Right cardiac atrium (tissue), 5 donors: ENCODE measurements at regions of chr1 and their contacts with region 1.

Region 1: DNA sequence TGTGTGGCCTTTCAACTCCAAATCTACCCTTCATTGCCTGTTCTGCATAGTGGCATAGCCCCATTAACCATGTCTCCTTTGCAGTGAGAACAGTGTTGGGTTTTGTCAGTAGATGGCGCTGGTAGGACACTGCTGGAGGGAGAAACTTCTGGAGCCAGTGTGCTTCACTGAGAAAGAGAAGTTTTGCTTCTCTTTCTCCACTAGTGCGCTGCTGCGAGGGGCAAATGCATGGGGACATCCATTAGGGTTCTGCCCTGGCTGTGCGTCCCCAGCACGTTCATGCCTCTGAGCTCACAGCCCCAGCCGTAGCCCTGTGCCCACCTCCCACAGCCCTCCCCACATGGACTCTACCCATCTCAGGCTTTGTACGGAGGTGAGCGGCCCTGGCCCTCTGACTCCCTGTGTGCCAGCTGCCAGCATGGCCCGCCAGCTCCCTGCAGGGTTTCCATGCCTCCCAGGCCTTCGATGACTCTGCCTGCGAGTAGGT is 53.1 kb downstream of the RIMS3 start:
- DNase-seq: peak in 2 of 3 donors; percentile 39 to 54
- ATAC-seq: peak; percentile 87 to 90
- H3K4me3 ChIP-seq: no peak overlapping the region
- H3K27ac ChIP-seq: no peak overlapping the region
- H3K4me1 ChIP-seq: no peaks in the 10 kb centered on the region
- H3K27me3 ChIP-seq: no peaks in the 10 kb centered on the region

Region 2: GRCh38 chr1:40668769-40669525 is 56.6 kb after region 1 on chr1:
- intact Hi-C with region 1: loop called (anchors 5 to 10 kb)
- DNase-seq: peak; percentile 73 to 90 (median 89)
- ATAC-seq: peak; percentile 34 to 40
- H3K4me3 ChIP-seq: no peak overlapping the region
- H3K27ac ChIP-seq: no peak overlapping the region
- H3K4me1 ChIP-seq: peaks cover 5% of the 10 kb centered on the region
- H3K27me3 ChIP-seq: no peaks in the 10 kb centered on the region

Region 3: GRCh38 chr1:40774266-40774998 is 162.0 kb after region 1 on chr1:
- intact Hi-C with region 1: loop called in 1 of 4 experiments (anchors 10 kb)
- DNase-seq: peak; percentile 43 to 85 (median 74)
- ATAC-seq: peak; percentile 40 to 44
- H3K4me3 ChIP-seq: no peak overlapping the region
- H3K27ac ChIP-seq: no peak overlapping the region
- H3K4me1 ChIP-seq: no peaks in the 10 kb centered on the region
- H3K27me3 ChIP-seq: no peaks in the 10 kb centered on the region

Region 4: DNA sequence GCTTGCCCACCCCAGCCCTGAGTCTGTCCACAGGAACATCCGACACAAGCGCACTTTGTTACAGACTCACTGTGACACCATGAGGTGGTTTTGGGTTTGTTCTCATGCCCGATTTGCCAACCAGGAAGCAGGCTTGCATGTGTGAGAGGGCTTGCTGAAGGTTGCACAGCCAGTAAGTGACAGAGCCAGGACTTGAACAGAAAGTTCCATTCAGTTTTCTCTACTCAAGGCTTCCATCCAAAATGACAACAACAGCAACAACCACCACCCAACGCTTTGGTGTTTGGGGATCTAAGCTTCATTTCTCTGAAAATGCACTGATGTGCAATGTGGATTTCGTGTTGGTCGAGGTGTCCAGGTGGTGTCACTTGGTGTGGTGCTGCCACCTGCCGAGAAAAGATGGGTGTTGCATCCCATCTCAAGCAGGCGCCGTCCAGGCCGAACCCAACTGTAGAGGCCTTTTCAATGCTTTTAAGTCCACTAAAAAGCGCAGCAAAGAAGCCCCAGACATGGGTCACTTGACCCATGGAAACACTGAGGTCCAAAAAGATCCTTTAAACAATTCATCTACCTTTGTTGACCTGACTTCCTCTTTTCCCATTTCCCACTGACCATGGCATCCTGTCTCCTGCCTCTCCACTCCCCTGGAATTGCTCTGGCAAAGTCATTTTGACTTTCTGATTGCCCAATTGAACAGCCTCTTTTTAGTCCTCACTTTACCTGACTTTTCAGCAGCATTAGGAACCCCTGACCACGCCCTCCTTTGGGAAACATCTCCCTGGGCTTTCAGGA is 237.6 kb after region 1 on chr1:
- intact Hi-C with region 1: loop called in 1 of 4 experiments (anchors 5 kb)
- DNase-seq: peak; percentile 64 to 87 (median 85)
- ATAC-seq: peak; percentile 77 to 79
- H3K4me3 ChIP-seq: no peak overlapping the region
- H3K27ac ChIP-seq: no peak overlapping the region
- H3K4me1 ChIP-seq: no peaks in the 10 kb centered on the region
- H3K27me3 ChIP-seq: no peaks in the 10 kb centered on the region

Region 5: GRCh38 chr1:40965529-40965928 is 353.1 kb after region 1 on chr1:
- intact Hi-C with region 1: no loop called
- DNase-seq: no peak
- ATAC-seq: peak in 1 of 2 donors; percentile 26
- H3K4me3 ChIP-seq: no peak overlapping the region
- H3K27ac ChIP-seq: no peak overlapping the region
- H3K4me1 ChIP-seq: no peaks in the 10 kb centered on the region
- H3K27me3 ChIP-seq: no peaks in the 10 kb centered on the region

Region 6: GRCh38 chr1:41045740-41046139 is 433.4 kb after region 1 on chr1:
- intact Hi-C with region 1: no loop called
- DNase-seq: peak; percentile 65 to 72 (median 71)
- ATAC-seq: peak; percentile 88 to 91
- H3K4me3 ChIP-seq: no peak overlapping the region
- H3K27ac ChIP-seq: peak overlapping the region; percentile 96
- H3K4me1 ChIP-seq: peaks cover 20% of the 10 kb centered on the region
- H3K27me3 ChIP-seq: no peaks in the 10 kb centered on the region